ENCODE measurements at regions of chr2 and their contacts with region 1.

Region 1: DNA sequence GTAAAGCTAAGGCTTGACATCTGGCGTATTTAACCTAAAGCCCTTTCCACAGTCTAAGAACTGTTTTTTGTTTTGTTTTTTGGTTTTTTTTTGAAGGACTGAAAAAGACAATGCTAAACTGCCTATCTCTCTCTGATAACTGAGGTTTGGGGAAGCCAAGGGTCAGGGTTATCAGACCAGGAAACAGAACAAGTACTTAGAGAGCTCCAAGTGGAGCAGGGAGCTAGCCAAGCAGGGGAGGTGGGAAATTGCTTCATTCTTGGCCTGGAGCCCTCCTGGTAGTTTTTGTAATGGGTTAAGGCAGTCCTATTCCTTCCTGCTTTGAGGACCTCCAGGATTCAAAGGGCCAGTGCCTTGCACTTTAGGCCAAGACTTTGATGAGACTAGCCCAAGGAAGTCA is 154.3 kb upstream of the LTBP1 start:
- DNase-seq: no peak
- CTCF ChIP-seq: no peak

Region 2: GRCh38 chr2:32977228-32977758 is 184.9 kb after region 1 on chr2:
- in situ Hi-C with region 1: no loop called
- DNase-seq: no peak
- CTCF ChIP-seq: no peak

Region 3: DNA sequence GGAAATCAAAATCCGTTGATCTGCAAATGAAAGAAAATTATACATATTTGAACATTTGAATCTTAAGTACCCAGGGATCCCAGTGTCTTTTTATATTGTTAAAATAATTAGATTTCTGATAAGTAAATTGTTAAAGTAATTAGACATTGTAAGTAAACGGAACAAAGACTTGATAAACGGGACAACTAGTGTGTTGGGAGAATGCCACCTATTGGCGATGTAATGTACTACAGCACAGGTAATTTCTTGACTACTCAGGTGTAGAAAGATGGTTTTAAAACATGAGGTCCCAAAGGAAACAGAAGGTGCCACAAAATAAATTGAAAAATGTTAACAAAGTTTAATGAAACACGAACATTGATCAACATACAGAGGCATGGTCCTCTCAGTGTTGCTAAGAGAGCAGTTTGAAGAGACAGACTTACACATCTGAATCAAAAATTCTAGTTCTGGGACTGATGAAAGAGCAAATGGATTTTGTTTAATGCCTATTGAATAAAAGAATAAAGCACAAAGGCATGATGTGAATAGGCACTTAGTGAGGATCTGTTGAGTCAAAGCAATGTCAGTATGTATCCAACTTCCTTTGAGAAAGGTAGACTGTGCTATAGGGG is 580.6 kb after region 1 on chr2:
- in situ Hi-C with region 1: loop called (anchors 25 kb)
- DNase-seq: peak; percentile 64
- CTCF ChIP-seq: peak; percentile 75

Region 4: GRCh38 chr2:33599175-33599942 is 806.9 kb after region 1 on chr2 and contains the start of gene FAM98A:
- in situ Hi-C with region 1: loop called (anchors 25 kb)
- DNase-seq: peak; percentile 93
- CTCF ChIP-seq: peak; percentile 0

Measured in GM13977 (cell line).